MCF 10A (cell line): ENCODE measurements at regions of chr12 and their contacts with region 1.

Region 1: DNA sequence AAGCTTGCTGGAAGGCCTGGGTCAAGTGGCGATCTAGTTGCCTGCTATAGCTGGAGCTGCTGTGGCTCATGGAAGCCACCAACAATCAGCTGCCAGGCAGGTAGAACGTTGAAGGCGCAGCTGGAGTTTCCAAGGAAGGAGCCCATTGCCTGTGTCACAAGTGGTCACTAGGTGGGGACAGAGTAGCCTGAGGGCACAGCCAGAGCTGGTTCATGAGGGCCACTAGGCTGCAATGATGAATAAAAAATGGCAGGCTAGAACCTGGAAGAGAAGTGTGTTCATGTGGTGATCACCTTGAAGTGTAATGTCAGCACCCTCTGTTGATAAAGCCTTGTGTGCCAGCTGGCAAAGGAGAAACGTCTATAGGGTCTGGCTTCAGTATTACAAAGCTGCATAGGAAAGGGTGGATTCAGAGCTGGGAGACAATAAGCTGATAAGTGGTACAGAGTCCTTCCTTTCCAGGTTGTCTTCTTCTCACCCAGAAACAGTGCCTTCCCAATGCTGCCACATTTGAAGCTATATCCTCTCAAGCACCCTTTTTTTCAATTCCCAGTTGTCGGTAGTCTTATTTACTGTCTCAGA is 165.8 kb downstream of the EMP1 start:
- DNase-seq: peak; percentile 80
- H3K4me3 Mint-ChIP-seq: no peak overlapping the region
- H3K27ac Mint-ChIP-seq: no peak overlapping the region
- H3K4me1 Mint-ChIP-seq: peaks cover 5% of the 10 kb centered on the region
- H3K27me3 Mint-ChIP-seq: peaks cover 51% of the 10 kb centered on the region
- CTCF ChIP-seq: peak; percentile 67

Region 2: DNA sequence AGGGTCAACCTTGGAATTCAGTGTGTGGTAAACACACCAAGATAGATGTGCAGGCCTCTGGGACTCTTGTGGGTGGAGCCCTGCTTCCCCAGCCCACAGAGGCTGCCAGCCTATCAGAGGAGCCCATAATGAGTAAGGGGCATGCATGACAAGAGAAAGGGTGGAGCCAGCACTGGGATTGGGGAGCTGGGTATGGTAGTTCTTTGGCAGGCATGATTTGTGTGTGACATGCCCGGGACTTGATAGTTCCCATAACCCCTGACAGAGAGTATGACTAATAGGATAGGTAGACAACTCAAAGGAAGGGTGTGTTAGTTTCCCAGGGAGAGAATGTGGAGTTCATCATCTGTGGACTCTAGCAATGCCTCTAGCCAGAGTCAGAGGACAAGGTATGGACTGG is 22.8 kb before region 1 on chr12:
- CTCF ChIA-PET with region 1: interaction called, 10 read pairs
- POLR2A ChIA-PET with region 1: no interaction called
- intact Hi-C with region 1: no loop called
- DNase-seq: peak; percentile 92
- H3K4me3 Mint-ChIP-seq: no peak overlapping the region
- H3K27ac Mint-ChIP-seq: peak overlapping the region; percentile 89
- H3K4me1 Mint-ChIP-seq: peaks cover 30% of the 10 kb centered on the region
- H3K27me3 Mint-ChIP-seq: no peaks in the 10 kb centered on the region
- CTCF ChIP-seq: no peak

Region 3: DNA sequence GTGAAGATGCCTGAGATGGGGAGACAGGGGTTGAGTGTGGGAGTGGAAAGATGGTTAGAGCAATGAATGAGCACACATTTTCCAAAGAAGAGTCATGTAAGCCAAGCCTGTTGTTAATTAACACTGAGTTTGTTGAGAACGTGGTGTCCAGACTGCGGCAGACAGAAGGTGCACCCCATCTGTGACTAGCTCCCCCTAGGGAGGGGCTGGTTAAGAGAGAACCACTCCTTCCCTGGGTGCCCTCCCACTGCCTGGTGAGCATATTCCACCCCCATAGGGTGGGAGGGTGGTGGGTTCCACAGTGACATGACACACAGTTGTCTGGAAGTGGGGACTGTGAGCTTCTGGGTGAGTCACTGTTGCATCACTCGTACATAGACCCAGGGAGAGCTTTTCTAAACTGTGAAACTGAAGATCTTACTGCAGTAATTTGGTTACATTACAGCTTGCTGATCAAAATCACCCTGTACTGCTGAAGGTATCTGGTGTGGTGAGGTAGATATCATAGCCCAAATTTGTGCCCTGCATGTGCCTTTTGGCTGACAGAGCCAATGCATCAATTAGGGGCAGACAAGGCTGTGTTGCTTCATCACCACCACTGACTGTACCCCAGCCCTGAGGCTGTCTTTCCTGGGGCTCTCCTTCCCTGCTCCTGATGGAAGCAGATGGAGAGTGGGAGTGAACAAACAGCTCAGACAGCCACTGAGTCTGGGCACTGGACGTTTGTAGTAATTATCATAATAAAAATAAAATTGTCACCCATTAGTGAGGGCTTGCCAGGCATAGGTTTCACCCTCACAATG is 14.9 kb before region 1 on chr12:
- CTCF ChIA-PET with region 1: interaction called, 16 read pairs
- POLR2A ChIA-PET with region 1: no interaction called
- intact Hi-C with region 1: no loop called
- DNase-seq: peak; percentile 72
- H3K4me3 Mint-ChIP-seq: no peak overlapping the region
- H3K27ac Mint-ChIP-seq: no peak overlapping the region
- H3K4me1 Mint-ChIP-seq: peaks cover 18% of the 10 kb centered on the region
- H3K27me3 Mint-ChIP-seq: peaks cover 7% of the 10 kb centered on the region
- CTCF ChIP-seq: no peak

Region 4: DNA sequence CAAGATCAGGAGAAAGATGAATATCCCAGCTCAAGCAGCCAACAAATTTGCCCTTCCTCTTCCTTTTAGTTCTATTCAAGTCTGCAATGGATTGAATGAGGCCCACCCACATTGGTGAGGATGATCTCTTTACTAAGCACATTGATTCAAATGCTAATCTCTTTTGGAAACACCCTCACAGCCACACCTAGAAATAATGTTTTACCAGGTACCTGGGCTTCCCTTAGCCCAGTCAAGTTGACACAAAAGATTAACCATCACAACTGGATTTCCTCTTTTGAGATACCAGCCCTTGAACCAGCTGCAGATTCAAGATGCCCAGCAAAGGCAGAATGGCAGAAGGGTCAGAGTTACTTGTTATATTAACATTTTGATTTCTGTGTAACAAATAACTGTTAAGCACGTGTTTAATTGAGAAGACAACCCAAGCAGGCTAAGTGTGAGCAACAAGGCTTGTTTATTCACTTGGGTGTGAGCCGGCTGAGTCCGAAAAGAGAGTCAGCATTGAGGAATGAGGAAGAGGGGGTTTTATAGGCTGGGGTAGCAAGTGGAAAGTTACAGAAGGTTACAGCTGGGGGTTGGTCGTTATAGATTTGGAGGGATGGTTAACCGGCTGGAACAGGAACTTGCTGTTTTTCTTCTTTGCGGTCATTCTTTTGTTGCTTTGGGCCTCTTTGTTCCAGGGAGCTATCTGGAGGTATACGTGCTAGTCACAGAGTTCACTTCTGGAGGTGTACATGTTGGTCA is 14.4 kb after region 1 on chr12:
- CTCF ChIA-PET with region 1: interaction called, 19 read pairs
- POLR2A ChIA-PET with region 1: no interaction called
- intact Hi-C with region 1: no loop called
- DNase-seq: no peak
- H3K4me3 Mint-ChIP-seq: no peak overlapping the region
- H3K27ac Mint-ChIP-seq: no peak overlapping the region
- H3K4me1 Mint-ChIP-seq: peaks cover 5% of the 10 kb centered on the region
- H3K27me3 Mint-ChIP-seq: peaks cover 3% of the 10 kb centered on the region
- CTCF ChIP-seq: no peak

Region 5: DNA sequence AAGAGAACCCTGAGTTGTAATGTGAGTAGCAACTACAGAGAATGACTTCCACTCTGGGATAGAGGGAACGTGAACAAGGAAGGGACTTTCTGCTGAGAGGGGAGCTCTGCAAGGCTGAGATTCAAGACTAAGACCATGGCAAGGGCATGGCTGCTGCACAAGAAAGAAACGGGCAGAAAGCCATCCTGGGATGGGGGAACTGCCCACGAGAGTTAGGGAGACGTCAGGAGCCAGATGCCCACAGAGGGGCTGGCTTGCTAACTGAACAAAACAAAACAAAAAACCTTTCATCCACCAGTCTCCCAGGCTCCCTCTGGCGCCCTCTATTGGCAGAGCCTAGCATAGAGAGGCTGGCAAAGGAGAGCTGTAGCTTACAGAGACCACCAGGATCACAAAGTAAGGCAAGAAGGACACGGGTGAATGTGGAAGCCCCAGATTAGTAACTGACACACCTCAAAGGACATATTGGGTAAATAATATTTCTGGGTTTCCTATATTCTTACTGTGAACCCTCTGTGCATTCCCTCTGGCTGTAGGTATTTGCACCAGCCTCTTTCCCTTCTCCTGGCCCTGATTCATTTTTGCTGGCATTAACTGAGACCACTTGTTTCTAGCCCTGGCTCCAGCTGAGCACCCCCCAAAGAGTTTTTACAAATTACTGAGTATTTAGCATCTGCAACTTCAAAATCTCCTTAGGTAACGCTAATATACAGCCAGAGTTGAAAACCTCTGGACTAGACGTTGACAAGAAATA is 172.5 kb after region 1 on chr12:
- CTCF ChIA-PET with region 1: interaction called, 16 read pairs
- POLR2A ChIA-PET with region 1: no interaction called
- intact Hi-C with region 1: loop called (anchors 1 kb)
- DNase-seq: peak; percentile 75
- H3K4me3 Mint-ChIP-seq: no peak overlapping the region
- H3K27ac Mint-ChIP-seq: no peak overlapping the region
- H3K4me1 Mint-ChIP-seq: no peaks in the 10 kb centered on the region
- H3K27me3 Mint-ChIP-seq: peaks cover 27% of the 10 kb centered on the region
- CTCF ChIP-seq: peak; percentile 86

Region 6: GRCh38 chr12:13661005-13661887 is 298.9 kb after region 1 on chr12:
- CTCF ChIA-PET with region 1: interaction called, 3 read pairs
- POLR2A ChIA-PET with region 1: no interaction called
- intact Hi-C with region 1: loop called (anchors 1 kb)
- DNase-seq: peak; percentile 62
- H3K4me3 Mint-ChIP-seq: no peak overlapping the region
- H3K27ac Mint-ChIP-seq: no peak overlapping the region
- H3K4me1 Mint-ChIP-seq: no peaks in the 10 kb centered on the region
- H3K27me3 Mint-ChIP-seq: peaks cover 32% of the 10 kb centered on the region
- CTCF ChIP-seq: peak; percentile 73

Region 7: DNA sequence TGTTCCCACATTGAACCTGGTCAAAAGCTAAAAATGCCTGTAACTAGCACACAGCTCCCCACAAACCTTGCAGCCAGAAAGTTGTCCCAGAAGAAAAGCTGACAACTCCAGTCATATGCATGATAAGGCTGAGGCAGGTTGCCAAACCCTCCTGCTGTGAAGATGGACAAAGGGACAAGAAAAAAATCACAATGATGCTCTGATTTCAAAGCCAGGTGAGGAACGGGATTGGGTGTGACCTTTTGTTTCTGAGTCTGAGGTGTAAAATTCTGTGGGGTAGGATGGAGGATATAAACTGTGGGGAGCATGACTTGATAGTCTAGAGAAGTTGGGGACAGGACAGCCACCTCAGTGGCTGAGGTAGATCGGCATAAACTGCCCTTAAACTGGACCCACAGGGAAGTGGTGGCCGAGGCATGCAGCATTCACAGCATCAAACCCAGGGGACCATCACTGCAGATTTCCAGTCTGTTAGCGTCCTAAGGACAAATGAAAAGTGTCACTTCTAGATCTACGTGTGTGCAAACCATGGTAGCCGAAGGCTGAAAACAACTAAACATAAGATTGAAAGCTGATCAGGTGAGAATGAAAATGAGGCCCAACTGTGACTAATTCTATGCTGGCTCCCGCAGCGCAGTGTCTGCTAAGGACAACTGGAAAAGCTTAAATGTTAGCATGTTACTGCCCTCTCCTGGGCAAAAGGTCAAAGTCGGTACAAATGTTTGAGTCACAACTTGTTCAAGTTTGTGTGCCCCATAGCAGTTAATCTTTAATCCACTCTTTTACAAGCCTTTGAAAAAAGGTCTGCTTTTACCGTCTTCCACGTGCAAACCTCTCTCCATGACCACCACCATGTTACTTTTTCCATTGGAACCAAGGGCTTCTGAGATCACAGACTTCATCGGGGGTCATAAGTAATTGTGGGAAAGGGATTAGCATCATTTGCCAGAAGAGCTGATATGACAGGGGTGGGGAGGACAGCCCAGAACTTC is 579.2 kb after region 1 on chr12:
- CTCF ChIA-PET with region 1: interaction called, 5 read pairs
- POLR2A ChIA-PET with region 1: no interaction called
- intact Hi-C with region 1: loop called (anchors 2 kb)
- DNase-seq: peak; percentile 80
- H3K4me3 Mint-ChIP-seq: no peak overlapping the region
- H3K27ac Mint-ChIP-seq: no peak overlapping the region
- H3K4me1 Mint-ChIP-seq: no peaks in the 10 kb centered on the region
- H3K27me3 Mint-ChIP-seq: no peaks in the 10 kb centered on the region
- CTCF ChIP-seq: peak; percentile 41